Left lung (tissue), 14 donors: ENCODE measurements at regions of chr12 and their contacts with region 1.

Region 1: GRCh38 chr12:1583421-1584078 is 10.8 kb downstream of the FBXL14 start:
- DNase-seq: peak in 2 of 4 donors; percentile 79 to 89
- ATAC-seq: peak; percentile 95
- H3K4me3 ChIP-seq: no peak overlapping the region
- H3K27ac ChIP-seq: no peak overlapping the region
- H3K4me1 ChIP-seq: peaks cover 0 to 28% of the 10 kb centered on the region in 2 donors
- H3K27me3 ChIP-seq: no peaks in the 10 kb centered on the region
- CTCF ChIP-seq: peak; percentile 88 to 90

Region 2: DNA sequence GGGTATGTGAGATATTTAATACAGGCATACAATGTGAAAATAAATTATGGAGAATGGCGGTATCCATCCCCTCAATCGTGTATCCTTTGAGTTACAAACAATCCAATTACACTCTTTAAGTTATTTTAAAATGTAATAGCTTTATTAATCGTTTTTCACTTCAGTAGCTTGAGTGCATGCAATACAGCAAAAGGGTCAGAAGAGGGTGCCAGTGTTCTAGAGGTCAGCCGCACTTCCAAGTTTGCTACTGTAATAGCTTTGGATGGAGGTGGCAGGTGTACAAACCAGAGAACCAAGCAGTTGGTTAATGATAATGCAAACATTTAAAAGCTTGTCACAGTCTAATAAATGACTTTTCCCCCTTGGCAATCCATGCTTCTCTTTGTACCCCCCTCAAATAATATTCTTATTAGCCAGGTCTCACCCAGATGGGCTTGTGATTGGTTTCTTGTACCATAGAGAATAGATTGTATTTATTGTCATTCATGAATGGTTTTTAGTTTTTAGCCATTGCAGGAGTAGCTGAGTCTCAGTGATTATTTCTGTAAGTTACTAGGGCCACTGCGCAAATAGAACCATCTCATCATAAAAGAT is 465.5 kb before region 1 on chr12:
- intact Hi-C with region 1: loop called in 1 of 2 experiments (anchors 5 kb)
- DNase-seq: peak in 3 of 4 donors; percentile 50 to 81 (median 67)
- ATAC-seq: peak; percentile 91
- H3K4me3 ChIP-seq: no peak overlapping the region
- H3K27ac ChIP-seq: no peak overlapping the region
- H3K4me1 ChIP-seq: no peaks in the 10 kb centered on the region
- H3K27me3 ChIP-seq: no peaks in the 10 kb centered on the region
- CTCF ChIP-seq: peak; percentile 83 to 85

Region 3: GRCh38 chr12:1880153-1880845 is 296.7 kb after region 1 on chr12:
- intact Hi-C with region 1: no loop called
- DNase-seq: no peak
- ATAC-seq: no peak
- H3K4me3 ChIP-seq: no peak overlapping the region
- H3K27ac ChIP-seq: no peak overlapping the region
- H3K4me1 ChIP-seq: no peaks in the 10 kb centered on the region
- H3K27me3 ChIP-seq: peaks cover 0 to 11% of the 10 kb centered on the region in 2 donors
- CTCF ChIP-seq: no peak

Region 4: GRCh38 chr12:2034633-2035430 is 451.3 kb after region 1 on chr12:
- intact Hi-C with region 1: no loop called
- DNase-seq: peak; percentile 75 to 97 (median 90)
- ATAC-seq: peak; percentile 100
- H3K4me3 ChIP-seq: peak overlapping the region; percentile 17 to 28
- H3K27ac ChIP-seq: no peak overlapping the region
- H3K4me1 ChIP-seq: peaks cover 8 to 10% of the 10 kb centered on the region in 2 donors
- H3K27me3 ChIP-seq: peaks cover 0 to 49% of the 10 kb centered on the region in 2 donors
- CTCF ChIP-seq: peak; percentile 97 to 98